CD8-positive, alpha-beta T cell (primary cell): ENCODE measurements at regions of chr2 and their contacts with region 1.

Region 1: DNA sequence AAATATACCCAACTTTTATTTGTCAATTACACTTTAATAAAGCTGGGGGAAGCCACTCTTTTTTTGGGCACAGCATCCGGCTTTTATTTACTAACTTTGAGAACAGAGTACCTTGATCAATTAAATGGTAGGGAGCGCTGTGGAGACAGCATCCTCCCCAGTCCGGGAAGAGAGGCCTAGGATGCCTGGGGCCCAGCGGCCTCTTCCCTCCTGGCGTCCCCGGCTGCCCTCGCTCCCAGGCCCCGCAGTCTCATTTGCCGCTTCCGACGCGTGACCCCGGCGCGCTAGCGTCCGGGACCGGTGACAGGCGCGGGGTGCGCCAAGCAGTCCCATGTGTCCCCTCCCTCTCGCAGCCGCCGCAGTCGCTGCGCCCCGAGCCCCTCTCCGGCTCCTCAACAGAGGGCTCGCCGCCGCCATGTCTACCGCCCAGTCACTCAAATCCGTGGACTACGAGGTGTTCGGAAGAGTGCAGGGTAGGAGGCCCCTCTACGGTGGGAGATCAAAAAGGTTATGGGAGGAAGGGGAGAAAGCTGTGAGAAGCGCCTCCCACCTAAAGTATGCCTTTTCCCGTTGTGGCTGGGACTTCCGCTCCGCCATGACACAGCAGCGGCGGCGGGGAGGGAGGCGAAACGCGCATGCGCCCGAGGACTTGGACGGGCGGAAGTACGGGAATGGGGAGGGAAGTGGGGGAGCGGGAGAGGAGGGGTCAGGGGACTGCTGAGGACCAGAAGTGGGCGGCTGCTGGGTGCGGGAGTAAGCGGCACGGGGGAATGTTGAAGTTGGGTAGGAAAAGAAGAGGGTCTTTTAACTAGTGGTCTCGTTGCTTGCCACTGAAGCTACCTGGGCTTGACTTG is at the start of gene ACYP2:
- DNase-seq: peak; percentile 77 to 96 (median 91)
- ATAC-seq: peak; percentile 81
- H3K4me3 ChIP-seq: peak within 1 kb of the TSS; percentile 75 to 93
- H3K4me3 Mint-ChIP-seq: peak within 1 kb of the TSS; percentile 98
- H3K27ac ChIP-seq: peak within 1 kb of the TSS; percentile 94 to 98
- H3K27ac Mint-ChIP-seq: peak within 1 kb of the TSS; percentile 100
- H3K4me1 ChIP-seq: peaks cover 5% of the 10 kb centered on the region
- H3K4me1 Mint-ChIP-seq: peaks cover 22% of the 10 kb centered on the region
- H3K27me3 ChIP-seq: no peaks in the 10 kb centered on the region
- H3K27me3 Mint-ChIP-seq: no peaks in the 10 kb centered on the region
- CTCF ChIP-seq: no peak
- total RNA-seq, gene ACYP2: 10.2 to 10.4 TPM

Region 2: DNA sequence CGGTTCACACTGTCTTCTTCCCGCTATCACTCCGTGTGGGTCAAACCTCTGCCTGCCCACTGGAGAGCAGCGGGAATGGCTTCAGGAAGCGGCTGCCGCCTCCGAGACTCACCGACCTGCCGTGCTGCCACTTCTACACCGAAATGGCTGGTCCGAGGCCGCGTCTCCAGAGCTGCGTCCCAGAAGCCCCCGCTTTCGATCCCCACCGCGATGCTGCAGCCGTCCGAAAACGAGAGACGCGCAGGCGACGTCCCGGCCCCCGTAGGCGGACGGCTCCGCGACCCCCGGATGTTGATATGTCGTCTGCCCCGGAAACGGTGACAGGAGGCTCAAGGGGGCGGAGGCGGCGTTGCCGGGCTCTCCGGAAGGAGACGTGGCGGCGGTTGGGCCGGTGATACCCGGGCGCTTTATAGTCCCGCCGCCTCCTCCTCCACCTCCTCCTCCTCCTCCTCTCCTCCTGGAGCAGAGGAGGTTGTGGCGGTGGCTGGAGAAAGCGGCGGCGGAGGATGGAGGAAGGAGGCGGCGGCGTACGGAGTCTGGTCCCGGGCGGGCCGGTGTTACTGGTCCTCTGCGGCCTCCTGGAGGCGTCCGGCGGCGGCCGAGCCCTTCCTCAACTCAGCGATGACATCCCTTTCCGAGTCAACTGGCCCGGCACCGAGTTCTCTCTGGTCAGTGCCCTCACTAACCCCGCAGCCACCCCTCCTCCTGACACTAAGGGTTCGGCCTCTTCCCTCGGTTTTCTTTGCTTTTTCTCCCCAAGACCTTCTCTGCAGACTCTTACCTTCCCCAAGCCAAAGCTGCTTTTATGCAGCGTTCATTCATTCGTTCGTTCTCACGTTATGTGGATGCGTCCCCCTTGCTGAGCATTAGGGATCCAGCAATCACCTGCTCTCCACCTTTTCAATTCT is 328.6 kb before region 1 on chr2 and contains the starts of genes ASB3 and ERLEC1:
- CTCF ChIA-PET with region 1: no interaction called
- POLR2A ChIA-PET with region 1: no interaction called
- intact Hi-C with region 1: loop called (anchors 1 to 2 kb)
- DNase-seq: peak; percentile 78 to 95 (median 90)
- ATAC-seq: peak; percentile 88
- H3K4me3 ChIP-seq: peak within 1 kb of the TSS; percentile 94 to 96
- H3K4me3 Mint-ChIP-seq: peak within 1 kb of the TSS; percentile 95
- H3K27ac ChIP-seq: peak within 1 kb of the TSS; percentile 88 to 89
- H3K27ac Mint-ChIP-seq: peak within 1 kb of the TSS; percentile 95
- H3K4me1 ChIP-seq: peaks cover 30% of the 10 kb centered on the region
- H3K4me1 Mint-ChIP-seq: peaks cover 63% of the 10 kb centered on the region
- H3K27me3 ChIP-seq: no peaks in the 10 kb centered on the region
- H3K27me3 Mint-ChIP-seq: no peaks in the 10 kb centered on the region
- CTCF ChIP-seq: no peak
- total RNA-seq, gene ASB3: 25.0 to 26.2 TPM
- total RNA-seq, gene ERLEC1: 24.1 to 27.1 TPM

Region 3: DNA sequence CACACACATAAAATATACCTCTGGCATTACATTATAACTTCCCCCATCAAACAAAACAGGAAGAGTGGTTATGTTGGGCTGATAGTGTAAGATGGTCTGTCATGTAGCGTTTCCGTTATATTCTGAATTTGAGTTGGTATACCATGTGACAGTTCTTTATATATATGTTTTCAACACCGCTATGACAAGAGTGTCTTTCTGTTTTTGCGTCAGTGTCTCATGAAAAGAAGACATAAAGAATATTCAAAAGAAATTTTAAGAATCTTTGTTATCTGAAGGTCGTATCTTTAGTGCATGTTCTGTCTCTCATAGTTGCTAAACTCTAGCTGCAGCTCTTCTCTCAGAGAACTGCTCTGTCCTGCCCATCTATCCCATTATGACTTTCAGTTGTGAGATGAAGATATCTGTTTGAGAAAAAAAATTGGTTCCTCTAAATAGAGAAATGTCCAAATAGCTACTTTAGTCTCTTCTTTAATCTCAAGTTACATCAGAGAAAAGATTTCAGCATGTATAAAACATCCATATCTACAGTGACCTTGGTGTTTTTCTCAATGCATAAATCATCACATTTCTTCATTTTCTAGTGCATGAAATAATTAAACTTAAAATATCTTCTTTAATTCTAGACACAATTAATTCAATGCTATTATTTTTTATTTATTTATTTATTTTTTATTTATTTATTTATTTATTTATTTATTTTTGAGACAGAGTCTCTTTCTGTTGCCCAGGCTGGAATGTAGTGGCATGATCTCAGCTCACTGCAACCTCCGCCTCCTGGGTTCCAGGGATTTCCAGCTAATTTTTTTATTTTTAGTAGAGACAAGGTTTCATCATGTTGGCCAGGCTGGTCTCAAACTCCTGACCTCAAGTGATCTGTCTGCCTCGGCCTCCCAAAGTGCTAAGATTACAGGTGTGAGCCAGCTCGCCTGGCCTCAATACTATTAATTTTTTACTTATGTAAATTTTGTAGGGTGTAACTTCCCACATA is 120.4 kb before region 1 on chr2:
- CTCF ChIA-PET with region 1: no interaction called
- POLR2A ChIA-PET with region 1: no interaction called
- intact Hi-C with region 1: loop called in 1 of 2 experiments (anchors 1 kb)
- DNase-seq: peak in 2 of 9 experiments; percentile 77 to 89
- ATAC-seq: peak; percentile 90
- H3K4me3 ChIP-seq: peak overlapping the region; percentile 19 to 44
- H3K4me3 Mint-ChIP-seq: peak overlapping the region; percentile 75
- H3K27ac ChIP-seq: peak overlapping the region; percentile 76 to 91
- H3K27ac Mint-ChIP-seq: peak overlapping the region; percentile 93
- H3K4me1 ChIP-seq: peaks cover 47% of the 10 kb centered on the region
- H3K4me1 Mint-ChIP-seq: peaks cover 33% of the 10 kb centered on the region
- H3K27me3 ChIP-seq: no peaks in the 10 kb centered on the region
- H3K27me3 Mint-ChIP-seq: no peaks in the 10 kb centered on the region
- CTCF ChIP-seq: no peak

Region 4: DNA sequence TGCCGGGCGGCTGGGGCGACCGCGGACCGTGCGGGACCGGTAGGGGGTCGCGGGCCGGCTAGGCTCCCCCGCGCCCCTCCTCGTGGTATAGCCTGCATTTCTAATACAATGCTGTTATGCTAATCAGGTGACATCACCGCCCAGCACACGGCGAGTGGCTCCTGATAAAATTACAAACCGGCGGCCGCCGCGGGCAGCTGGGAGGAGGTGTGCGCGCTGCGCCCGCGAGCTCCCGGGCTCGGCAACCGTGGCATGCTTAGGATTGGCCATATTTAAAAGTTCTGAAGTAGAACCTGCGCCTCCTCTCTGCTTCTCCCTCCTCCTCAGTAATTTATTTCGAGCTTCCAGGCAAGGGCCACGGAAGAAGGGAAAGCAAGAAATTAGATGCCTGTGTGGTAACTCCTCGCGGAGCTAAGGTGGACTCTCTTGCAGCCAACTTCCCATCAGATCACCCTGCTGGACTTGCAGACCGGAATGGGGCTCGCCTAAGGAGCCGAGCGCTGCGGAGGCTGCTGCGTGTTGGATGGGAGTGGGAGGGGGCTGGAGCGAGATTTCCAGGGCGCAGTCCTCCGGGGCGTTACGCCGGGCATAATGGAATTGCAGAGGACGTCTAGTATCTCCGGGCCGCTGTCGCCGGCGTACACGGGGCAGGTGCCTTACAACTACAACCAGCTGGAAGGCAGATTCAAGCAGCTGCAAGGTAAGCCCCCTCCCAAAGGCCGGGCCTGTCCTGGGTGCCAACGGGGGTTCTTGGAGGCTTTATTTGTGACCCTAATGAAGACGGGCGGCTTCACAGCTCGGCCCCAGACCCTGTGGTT is 442.9 kb after region 1 on chr2:
- CTCF ChIA-PET with region 1: no interaction called
- POLR2A ChIA-PET with region 1: interaction called, 3 read pairs
- intact Hi-C with region 1: loop called (anchors 5 kb)
- DNase-seq: peak; percentile 43 to 85 (median 69)
- ATAC-seq: peak; percentile 67
- H3K4me3 ChIP-seq: peak overlapping the region; percentile 92 to 94
- H3K4me3 Mint-ChIP-seq: peak overlapping the region; percentile 98
- H3K27ac ChIP-seq: peak overlapping the region; percentile 81 to 82
- H3K27ac Mint-ChIP-seq: peak overlapping the region; percentile 93
- H3K4me1 ChIP-seq: peaks cover 35% of the 10 kb centered on the region
- H3K4me1 Mint-ChIP-seq: peaks cover 64% of the 10 kb centered on the region
- H3K27me3 ChIP-seq: no peaks in the 10 kb centered on the region
- H3K27me3 Mint-ChIP-seq: no peaks in the 10 kb centered on the region
- CTCF ChIP-seq: no peak

Region 5: DNA sequence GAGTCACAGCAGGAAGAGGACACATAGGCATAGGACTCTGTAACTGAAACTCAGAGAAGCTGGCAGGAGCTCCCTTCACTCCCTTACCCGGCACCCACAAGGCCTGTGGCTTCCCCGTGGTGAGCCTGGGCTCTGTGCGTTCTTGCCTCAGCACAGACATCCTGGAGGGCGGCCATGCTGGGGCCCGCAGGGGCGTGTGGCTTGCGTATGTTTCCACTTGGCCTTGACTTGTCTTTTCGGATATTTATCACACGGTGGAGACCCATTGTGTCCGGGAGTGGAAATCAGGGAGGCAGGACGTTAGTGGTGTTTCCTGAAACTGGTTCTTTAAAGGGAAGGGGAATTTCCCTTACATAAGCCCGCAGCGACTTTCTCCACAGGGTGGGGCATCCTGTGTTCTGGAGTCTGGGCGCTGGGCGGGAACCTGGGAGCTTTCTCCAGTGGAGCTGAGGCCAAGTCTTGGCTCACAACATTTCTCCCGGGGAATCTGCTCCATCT is 558.0 kb after region 1 on chr2:
- CTCF ChIA-PET with region 1: no interaction called
- POLR2A ChIA-PET with region 1: no interaction called
- intact Hi-C with region 1: no loop called
- DNase-seq: peak in 4 of 9 experiments; percentile 14 to 53 (median 32)
- ATAC-seq: peak; percentile 55
- H3K4me3 ChIP-seq: no peak overlapping the region
- H3K4me3 Mint-ChIP-seq: peak overlapping the region; percentile 22
- H3K27ac ChIP-seq: no peak overlapping the region
- H3K27ac Mint-ChIP-seq: peak overlapping the region; percentile 49
- H3K4me1 ChIP-seq: no peaks in the 10 kb centered on the region
- H3K4me1 Mint-ChIP-seq: peaks cover 11% of the 10 kb centered on the region
- H3K27me3 ChIP-seq: no peaks in the 10 kb centered on the region
- H3K27me3 Mint-ChIP-seq: peaks cover 4% of the 10 kb centered on the region
- CTCF ChIP-seq: no peak

Region 6: DNA sequence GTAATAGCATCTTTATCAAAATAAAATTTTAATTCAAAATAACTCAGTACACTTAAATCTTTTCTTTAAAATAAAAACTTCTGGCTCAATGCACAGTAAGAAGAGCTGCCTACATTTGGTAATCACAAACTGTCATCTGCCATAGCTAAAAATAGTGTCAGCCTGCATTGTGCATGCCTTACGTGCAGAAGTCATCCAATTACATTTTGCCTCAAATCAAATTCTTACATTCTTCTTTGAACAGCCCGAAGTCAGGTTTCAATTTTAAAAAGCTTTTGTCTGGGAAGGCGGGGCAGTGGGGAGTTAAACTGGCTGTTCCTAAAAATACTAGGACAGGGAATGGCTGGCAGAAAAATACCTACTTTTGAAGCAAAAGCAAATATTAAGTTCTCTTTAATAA is 883.7 kb after region 1 on chr2:
- CTCF ChIA-PET with region 1: no interaction called
- POLR2A ChIA-PET with region 1: no interaction called
- intact Hi-C with region 1: loop called in 1 of 2 experiments (anchors 5 kb)
- DNase-seq: no peak
- ATAC-seq: no peak
- H3K4me3 ChIP-seq: no peak overlapping the region
- H3K4me3 Mint-ChIP-seq: no peak overlapping the region
- H3K27ac ChIP-seq: no peak overlapping the region
- H3K27ac Mint-ChIP-seq: no peak overlapping the region
- H3K4me1 ChIP-seq: peaks cover 29% of the 10 kb centered on the region
- H3K4me1 Mint-ChIP-seq: peaks cover 79% of the 10 kb centered on the region
- H3K27me3 ChIP-seq: no peaks in the 10 kb centered on the region
- H3K27me3 Mint-ChIP-seq: no peaks in the 10 kb centered on the region
- CTCF ChIP-seq: no peak

Region 7: GRCh38 chr2:55232084-55232862 is 1116.8 kb after region 1 on chr2 and contains the starts of genes CLHC1 and RPS27A:
- CTCF ChIA-PET with region 1: no interaction called
- POLR2A ChIA-PET with region 1: no interaction called
- intact Hi-C with region 1: loop called (anchors 2 to 5 kb)
- DNase-seq: peak; percentile 89 to 97 (median 94)
- ATAC-seq: peak; percentile 87
- H3K4me3 ChIP-seq: peak within 1 kb of the TSS; percentile 97 to 99
- H3K4me3 Mint-ChIP-seq: peak within 1 kb of the TSS; percentile 93
- H3K27ac ChIP-seq: peak within 1 kb of the TSS; percentile 92 to 99
- H3K27ac Mint-ChIP-seq: peak within 1 kb of the TSS; percentile 97
- H3K4me1 ChIP-seq: peaks cover 35% of the 10 kb centered on the region
- H3K4me1 Mint-ChIP-seq: peaks cover 68% of the 10 kb centered on the region
- H3K27me3 ChIP-seq: no peaks in the 10 kb centered on the region
- H3K27me3 Mint-ChIP-seq: no peaks in the 10 kb centered on the region
- CTCF ChIP-seq: no peak
- total RNA-seq, gene CLHC1: 2.2 to 2.3 TPM
- total RNA-seq, gene RPS27A: 2,135 to 2,231 TPM

Region 8: GRCh38 chr2:55519938-55520885 is 1404.7 kb after region 1 on chr2:
- CTCF ChIA-PET with region 1: interaction called, 3 read pairs
- POLR2A ChIA-PET with region 1: no interaction called
- intact Hi-C with region 1: loop called in 1 of 2 experiments (anchors 10 kb)
- DNase-seq: peak in 8 of 9 experiments; percentile 14 to 67 (median 44)
- ATAC-seq: peak; percentile 27
- H3K4me3 ChIP-seq: peak overlapping the region; percentile 85 to 87
- H3K4me3 Mint-ChIP-seq: peak overlapping the region; percentile 97
- H3K27ac ChIP-seq: peak overlapping the region; percentile 85 to 95
- H3K27ac Mint-ChIP-seq: peak overlapping the region; percentile 100
- H3K4me1 ChIP-seq: peaks cover 8% of the 10 kb centered on the region
- H3K4me1 Mint-ChIP-seq: peaks cover 20% of the 10 kb centered on the region
- H3K27me3 ChIP-seq: no peaks in the 10 kb centered on the region
- H3K27me3 Mint-ChIP-seq: no peaks in the 10 kb centered on the region
- CTCF ChIP-seq: no peak